ENCODE measurements at regions of chr3 and their contacts with region 1.

Region 1: GRCh38 chr3:30768703-30769685 is 125.5 kb downstream of the GADL1 start:
- DNase-seq: peak; percentile 69 to 77
- H3K4me3 ChIP-seq: no peak overlapping the region
- H3K27ac ChIP-seq: no peak overlapping the region
- H3K4me1 ChIP-seq: no peaks in the 10 kb centered on the region
- H3K27me3 ChIP-seq: no peaks in the 10 kb centered on the region
- CTCF ChIP-seq: peak; percentile 39 to 75 (median 60)
- POLR2A ChIP-seq: no peak

Region 2: DNA sequence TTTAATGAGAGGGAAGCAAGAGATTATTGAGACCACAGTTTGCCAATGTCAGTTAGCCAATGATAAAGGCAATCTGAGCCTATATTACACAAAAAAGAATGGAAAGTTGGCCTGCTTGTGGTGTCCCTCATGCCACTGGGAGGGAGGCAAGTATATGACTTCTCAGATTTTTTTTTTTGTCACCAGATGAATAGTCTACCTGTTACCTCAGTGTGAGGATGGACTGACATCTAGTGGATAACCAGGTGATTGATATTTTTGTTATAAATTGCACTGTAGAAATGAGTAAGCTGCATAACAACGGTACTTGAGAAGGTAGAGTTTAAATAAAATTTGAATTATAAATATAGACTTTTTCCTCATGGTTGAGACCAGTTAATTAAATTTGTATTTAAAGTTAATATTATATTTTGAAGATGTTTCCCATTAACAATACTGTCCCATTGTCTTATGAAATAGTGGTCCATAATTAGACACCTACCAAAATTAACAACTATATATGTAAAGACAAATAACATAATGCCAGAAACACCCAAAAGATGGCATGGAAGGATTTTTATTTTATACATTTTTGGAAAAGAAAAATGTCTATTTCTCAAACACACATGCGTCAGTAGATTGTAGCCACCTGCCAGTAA is 363.3 kb after region 1 on chr3:
- intact Hi-C with region 1: loop called (anchors 5 kb)
- DNase-seq: no peak
- H3K4me3 ChIP-seq: no peak overlapping the region
- H3K27ac ChIP-seq: no peak overlapping the region
- H3K4me1 ChIP-seq: no peaks in the 10 kb centered on the region
- H3K27me3 ChIP-seq: no peaks in the 10 kb centered on the region
- CTCF ChIP-seq: peak in 5 of 6 experiments; percentile 37 to 89 (median 67)
- POLR2A ChIP-seq: no peak